ENCODE measurements at regions of chr5 and their contacts with region 1.

Region 1: DNA sequence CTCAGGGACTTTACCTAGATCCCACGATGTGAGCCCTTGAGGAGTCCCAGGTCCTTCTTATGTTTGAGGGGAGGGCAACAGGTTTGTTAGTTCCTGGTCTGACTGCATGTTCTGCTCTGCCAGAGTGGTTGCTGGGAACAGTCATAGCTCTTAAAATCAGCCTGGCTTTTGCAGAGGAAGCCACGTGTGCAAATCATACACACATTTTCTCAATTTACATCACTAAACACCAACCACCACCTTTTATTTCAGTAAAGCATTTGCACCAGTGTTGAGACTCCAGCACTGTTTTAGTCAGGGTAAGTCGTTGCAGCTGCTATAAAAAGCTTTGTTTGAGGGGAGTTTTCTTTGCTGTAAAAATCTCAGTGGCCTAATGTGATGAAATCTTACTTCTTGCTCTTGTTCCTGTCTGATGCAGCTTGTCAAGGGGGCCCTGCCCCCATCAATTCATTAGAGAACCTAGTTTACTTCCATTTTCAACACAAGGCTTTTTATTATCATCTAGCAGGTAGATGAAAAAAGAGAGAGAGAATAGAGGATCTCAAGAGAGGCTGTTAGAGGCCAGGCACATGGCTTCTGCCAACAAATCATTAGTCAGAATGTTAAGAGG is 70.3 kb upstream of the VCAN start:
- DNase-seq: no peak
- ATAC-seq: no peak
- H3K4me3 ChIP-seq: no peak overlapping the region
- H3K27ac ChIP-seq: no peak overlapping the region
- H3K4me1 ChIP-seq: peaks cover 0 to 15% (median 0%) of the 10 kb centered on the region in 12 donors
- H3K27me3 ChIP-seq: no peaks in the 10 kb centered on the region
- CTCF ChIP-seq: no peak
- POLR2A ChIP-seq: no peak

Region 2: DNA sequence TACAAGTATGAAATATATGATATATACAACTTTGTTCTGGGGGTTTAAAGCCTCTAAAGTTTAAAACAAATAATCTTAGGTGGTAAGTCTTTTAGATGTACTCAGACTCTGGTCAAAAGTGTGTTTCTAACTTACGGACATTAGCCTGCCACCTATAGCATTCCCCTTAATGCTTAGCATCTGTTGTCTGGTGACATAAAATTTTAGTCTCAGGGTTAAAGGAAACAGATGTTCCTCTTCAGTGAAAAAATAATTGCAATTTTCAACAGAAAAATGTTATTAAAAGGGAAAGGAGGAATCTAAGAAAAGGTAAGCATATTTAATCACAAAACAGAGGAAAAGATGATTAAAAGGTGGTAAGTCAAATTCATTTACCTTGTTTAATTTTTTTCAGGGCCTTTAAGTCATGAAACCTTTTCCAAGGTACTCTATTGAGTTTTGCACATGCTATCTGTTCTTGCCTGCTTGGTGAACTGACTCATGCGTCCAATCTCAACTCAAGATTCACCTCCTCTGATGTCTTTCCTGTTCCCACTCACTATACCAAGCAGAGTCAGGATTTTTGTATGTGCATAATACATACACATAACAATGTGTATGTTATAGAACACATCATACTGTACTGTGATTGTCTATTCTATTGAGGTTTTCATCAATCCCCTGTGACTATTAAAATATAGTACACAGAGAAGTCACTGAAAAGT is 332.0 kb before region 1 on chr5:
- intact Hi-C with region 1: loop called in 1 of 10 experiments (anchors 10 kb)
- DNase-seq: no peak
- ATAC-seq: no peak
- H3K4me3 ChIP-seq: no peak overlapping the region
- H3K27ac ChIP-seq: no peak overlapping the region
- H3K4me1 ChIP-seq: peaks cover 0 to 57% (median 24%) of the 10 kb centered on the region in 12 donors
- H3K27me3 ChIP-seq: no peaks in the 10 kb centered on the region
- CTCF ChIP-seq: no peak
- POLR2A ChIP-seq: no peak

Region 3: GRCh38 chr5:83517072-83517687 is 116.0 kb after region 1 on chr5:
- intact Hi-C with region 1: no loop called
- DNase-seq: no peak
- ATAC-seq: no peak
- H3K4me3 ChIP-seq: no peak overlapping the region
- H3K27ac ChIP-seq: peak overlapping the region in 2 of 12 donors; percentile 19 to 50
- H3K4me1 ChIP-seq: peaks cover 0 to 11% (median 0%) of the 10 kb centered on the region in 12 donors
- H3K27me3 ChIP-seq: no peaks in the 10 kb centered on the region
- CTCF ChIP-seq: no peak
- POLR2A ChIP-seq: no peak